Panc1 (cell line): ENCODE measurements at regions of chr1 and their contacts with region 1.

Region 1: DNA sequence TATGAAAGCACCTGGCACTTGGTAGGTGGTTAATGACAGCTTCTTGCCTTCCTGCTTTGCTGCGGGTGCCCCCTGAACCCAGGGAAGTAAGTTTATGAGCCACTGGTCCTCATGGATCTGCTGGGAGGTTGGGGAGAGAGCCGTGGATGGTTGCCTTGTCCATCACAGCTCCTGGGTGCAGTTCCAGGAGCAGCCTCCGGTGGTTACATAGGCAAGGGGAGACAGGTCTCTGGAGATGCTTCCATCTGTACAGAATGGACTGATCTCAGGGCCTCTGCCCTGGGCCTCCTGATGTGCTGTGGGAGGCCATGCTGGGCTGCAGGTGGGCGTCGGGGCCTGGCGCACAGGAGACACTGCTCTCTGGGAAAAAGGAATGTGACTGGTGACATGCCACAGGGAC is 31.6 kb upstream of the ARHGEF10L start:
- DNase-seq: no peak
- ATAC-seq: peak; percentile 76
- H3K4me3 ChIP-seq: no peak overlapping the region
- H3K27ac ChIP-seq: no peak overlapping the region
- H3K4me1 ChIP-seq: no peaks in the 10 kb centered on the region
- H3K27me3 ChIP-seq: no peaks in the 10 kb centered on the region
- CTCF ChIP-seq: no peak

Region 2: GRCh38 chr1:17207966-17208418 is 299.9 kb before region 1 on chr1:
- CTCF ChIA-PET with region 1: no interaction called
- POLR2A ChIA-PET with region 1: no interaction called
- in situ Hi-C with region 1: no loop called
- intact Hi-C with region 1: no loop called
- DNase-seq: peak; percentile 61
- ATAC-seq: peak; percentile 71
- H3K4me3 ChIP-seq: no peak overlapping the region
- H3K27ac ChIP-seq: peak overlapping the region; percentile 87
- H3K4me1 ChIP-seq: peaks cover 53% of the 10 kb centered on the region
- H3K27me3 ChIP-seq: no peaks in the 10 kb centered on the region
- CTCF ChIP-seq: no peak

Region 3: GRCh38 chr1:17531682-17532487 is 24.0 kb after region 1 on chr1:
- CTCF ChIA-PET with region 1: interaction called, 4 read pairs
- POLR2A ChIA-PET with region 1: no interaction called
- in situ Hi-C with region 1: no loop called
- intact Hi-C with region 1: loop called (anchors 1 kb)
- DNase-seq: no peak
- ATAC-seq: peak; percentile 74
- H3K4me3 ChIP-seq: no peak overlapping the region
- H3K27ac ChIP-seq: peak overlapping the region; percentile 64
- H3K4me1 ChIP-seq: peaks cover 21% of the 10 kb centered on the region
- H3K27me3 ChIP-seq: no peaks in the 10 kb centered on the region
- CTCF ChIP-seq: no peak

Region 4: GRCh38 chr1:17551755-17552234 is 43.9 kb after region 1 on chr1:
- CTCF ChIA-PET with region 1: interaction called, 14 read pairs
- POLR2A ChIA-PET with region 1: interaction called, 3 read pairs
- in situ Hi-C with region 1: no loop called
- intact Hi-C with region 1: no loop called
- DNase-seq: no peak
- ATAC-seq: peak; percentile 67
- H3K4me3 ChIP-seq: no peak overlapping the region
- H3K27ac ChIP-seq: no peak overlapping the region
- H3K4me1 ChIP-seq: peaks cover 12% of the 10 kb centered on the region
- H3K27me3 ChIP-seq: no peaks in the 10 kb centered on the region
- CTCF ChIP-seq: no peak